WTC11 (cell line): ENCODE measurements at regions of chr20 and their contacts with region 1.

Region 1: DNA sequence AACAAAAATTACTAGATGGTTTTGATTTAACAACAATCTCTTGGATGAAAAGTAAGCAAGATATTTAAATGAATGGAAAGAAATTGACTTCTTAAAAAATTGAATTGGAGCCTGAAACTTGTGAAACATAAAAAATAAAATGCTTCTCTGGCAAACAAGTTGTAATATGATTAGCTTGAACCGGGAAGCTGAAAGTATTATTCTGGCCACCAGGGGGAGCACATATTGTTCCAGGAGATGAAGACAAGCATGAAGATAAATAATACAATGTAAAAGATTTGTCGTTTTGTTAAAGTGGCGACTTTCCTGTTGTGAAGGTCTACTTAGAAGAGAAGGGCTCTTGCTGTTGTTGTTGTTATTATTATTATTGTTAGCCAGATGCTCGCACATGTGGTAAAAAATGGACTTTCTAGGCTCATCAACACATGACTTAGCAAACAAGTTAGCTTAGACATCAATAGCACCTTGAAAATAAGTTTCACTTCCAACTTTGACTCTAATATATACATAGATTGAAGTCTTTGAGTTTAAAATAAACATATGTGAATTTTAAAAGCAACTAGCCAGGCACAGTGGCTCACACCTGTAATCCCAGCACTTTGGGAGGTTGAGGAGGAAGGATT is 14.2 kb downstream of the PAX1 start:
- DNase-seq: peak; percentile 74
- ATAC-seq: no peak
- H3K4me3 Mint-ChIP-seq: no peak overlapping the region
- H3K27ac Mint-ChIP-seq: no peak overlapping the region
- H3K4me1 Mint-ChIP-seq: peaks cover 26% of the 10 kb centered on the region
- H3K27me3 Mint-ChIP-seq: peaks cover 51% of the 10 kb centered on the region
- CTCF ChIP-seq: peak; percentile 69

Region 2: DNA sequence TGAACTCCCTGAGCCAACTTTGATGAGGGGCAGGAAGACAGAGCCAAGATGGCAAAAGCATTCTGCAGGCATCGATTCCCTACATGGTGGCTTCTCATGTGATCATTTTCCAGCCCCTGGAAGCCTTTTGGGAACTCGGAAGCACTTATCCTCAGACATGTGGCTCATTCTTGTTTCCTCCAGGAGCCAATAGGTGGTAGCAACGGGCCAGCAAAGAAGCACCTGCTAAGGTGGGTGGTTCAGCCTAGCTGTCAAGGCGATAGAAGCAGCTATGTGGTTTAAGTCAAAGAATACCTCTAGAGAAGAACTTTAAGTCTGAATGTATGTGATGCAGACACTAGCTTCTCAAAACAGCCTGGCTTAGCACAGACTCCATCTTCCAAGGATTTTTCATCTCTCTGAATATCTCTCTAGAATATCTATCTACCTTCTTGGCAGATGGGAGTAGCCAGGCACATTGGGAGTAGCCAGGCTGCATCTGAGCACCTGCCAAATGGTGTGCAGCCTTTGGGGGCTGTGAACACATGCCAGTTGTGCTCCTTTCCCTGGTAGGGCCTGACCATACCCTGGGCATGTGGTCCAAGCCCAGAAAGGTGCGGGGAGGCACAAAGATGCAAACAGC is 79.0 kb before region 1 on chr20:
- CTCF ChIA-PET with region 1: interaction called, 18 read pairs
- POLR2A ChIA-PET with region 1: no interaction called
- DNase-seq: peak; percentile 68
- ATAC-seq: peak; percentile 99
- H3K4me3 Mint-ChIP-seq: no peak overlapping the region
- H3K27ac Mint-ChIP-seq: no peak overlapping the region
- H3K4me1 Mint-ChIP-seq: no peaks in the 10 kb centered on the region
- H3K27me3 Mint-ChIP-seq: peaks cover 3% of the 10 kb centered on the region; the same call in 1 of the 2 replicates
- CTCF ChIP-seq: peak; percentile 30; the same call in 1 of the 2 replicates

Region 3: DNA sequence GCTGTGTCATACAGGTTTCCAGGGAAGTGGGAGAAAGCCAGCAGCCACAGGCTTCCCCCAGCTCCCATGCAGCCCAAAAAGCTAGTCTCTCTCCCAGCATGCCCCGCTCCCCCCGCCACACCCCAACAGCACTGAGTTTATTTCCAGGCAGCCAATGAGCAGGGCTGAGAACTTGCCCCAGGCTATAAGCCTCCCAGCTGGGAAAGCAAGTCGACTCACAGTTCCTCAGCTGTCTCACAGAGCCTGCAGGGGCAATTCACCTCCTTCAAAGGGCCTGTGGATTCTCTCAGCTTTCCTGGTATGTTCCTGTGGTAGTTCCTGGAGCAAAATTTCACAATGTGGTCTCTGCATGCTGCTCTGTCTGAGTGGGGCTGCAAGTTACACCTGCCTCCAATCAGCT is 20.0 kb after region 1 on chr20:
- CTCF ChIA-PET with region 1: interaction called, 16 read pairs
- POLR2A ChIA-PET with region 1: no interaction called
- DNase-seq: no peak
- ATAC-seq: peak; percentile 41
- H3K4me3 Mint-ChIP-seq: no peak overlapping the region
- H3K27ac Mint-ChIP-seq: no peak overlapping the region
- H3K4me1 Mint-ChIP-seq: no peaks in the 10 kb centered on the region
- H3K27me3 Mint-ChIP-seq: peaks cover 5% of the 10 kb centered on the region
- CTCF ChIP-seq: no peak

Region 4: DNA sequence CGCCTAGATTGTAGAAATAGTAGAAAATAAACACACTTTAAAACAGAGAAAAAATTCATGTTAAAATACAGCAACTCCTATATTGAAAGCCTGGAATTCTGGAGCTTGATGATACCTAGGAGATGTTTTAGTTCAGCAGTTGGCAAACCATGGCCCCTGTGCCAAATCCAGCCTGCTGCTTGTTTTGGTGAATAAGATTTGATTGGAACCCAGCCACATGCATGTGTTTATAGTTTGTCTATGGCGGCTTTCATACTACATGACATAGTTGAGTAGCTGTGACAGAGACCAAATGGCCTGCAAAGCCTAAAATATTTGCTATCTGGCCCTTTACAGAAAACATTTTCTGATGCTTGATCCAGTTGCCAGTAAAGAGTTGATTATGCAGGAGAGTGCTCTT is 42.9 kb after region 1 on chr20:
- CTCF ChIA-PET with region 1: interaction called, 58 read pairs
- POLR2A ChIA-PET with region 1: no interaction called
- DNase-seq: no peak
- ATAC-seq: no peak
- H3K4me3 Mint-ChIP-seq: no peak overlapping the region
- H3K27ac Mint-ChIP-seq: no peak overlapping the region
- H3K4me1 Mint-ChIP-seq: no peaks in the 10 kb centered on the region
- H3K27me3 Mint-ChIP-seq: peaks cover 15% of the 10 kb centered on the region
- CTCF ChIP-seq: no peak

Region 5: DNA sequence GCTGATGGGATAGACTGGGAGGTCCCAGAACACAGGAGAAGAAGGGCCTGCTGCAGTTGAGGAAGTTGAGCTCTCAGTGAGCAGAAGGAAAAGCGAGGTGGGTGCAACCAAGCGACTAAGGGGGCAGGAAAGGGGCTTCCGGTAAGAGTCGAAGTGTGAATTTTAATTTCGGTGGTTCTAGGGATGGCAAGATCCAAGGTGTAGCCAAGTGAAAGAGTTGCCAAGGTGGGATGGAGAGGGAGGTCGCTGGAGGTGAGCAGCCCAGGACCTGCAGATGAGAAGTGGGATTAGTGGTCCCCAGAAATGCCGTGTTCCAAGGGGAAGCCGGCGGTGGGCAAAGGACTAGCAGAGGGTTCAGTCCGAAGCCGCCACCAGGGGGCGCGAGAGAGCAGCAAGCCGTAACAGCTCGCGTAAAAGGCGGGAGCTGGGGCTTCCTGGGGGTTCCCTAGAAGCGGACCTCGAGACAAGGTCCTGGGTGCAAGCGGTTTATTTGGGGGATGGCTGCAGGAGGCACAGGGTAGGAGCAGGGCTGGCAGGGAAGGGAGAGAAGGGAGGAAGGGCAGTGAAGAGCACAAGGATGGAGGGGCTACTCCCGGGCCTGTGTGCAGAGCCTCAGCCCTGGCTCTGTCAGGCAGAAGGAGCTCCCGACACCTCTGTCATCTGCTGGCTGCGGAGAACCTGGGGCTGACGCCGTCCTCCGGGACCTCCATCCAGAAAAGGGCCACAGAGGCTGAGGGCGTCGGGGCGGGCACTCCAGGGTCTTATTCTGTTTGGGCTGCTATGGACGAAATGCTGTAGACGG is 89.4 kb after region 1 on chr20:
- CTCF ChIA-PET with region 1: interaction called, 13 read pairs
- POLR2A ChIA-PET with region 1: no interaction called
- DNase-seq: peak; percentile 89
- ATAC-seq: peak; percentile 90
- H3K4me3 Mint-ChIP-seq: no peak overlapping the region
- H3K27ac Mint-ChIP-seq: no peak overlapping the region
- H3K4me1 Mint-ChIP-seq: peaks cover 2% of the 10 kb centered on the region; the same call in 1 of the 2 replicates
- H3K27me3 Mint-ChIP-seq: peaks cover 19% of the 10 kb centered on the region
- CTCF ChIP-seq: peak; percentile 99

Region 6: GRCh38 chr20:22020201-22020600 is 300.5 kb after region 1 on chr20:
- CTCF ChIA-PET with region 1: no interaction called
- POLR2A ChIA-PET with region 1: no interaction called
- DNase-seq: no peak
- ATAC-seq: no peak
- H3K4me3 Mint-ChIP-seq: no peak overlapping the region
- H3K27ac Mint-ChIP-seq: no peak overlapping the region
- H3K4me1 Mint-ChIP-seq: no peaks in the 10 kb centered on the region
- H3K27me3 Mint-ChIP-seq: no peaks in the 10 kb centered on the region
- CTCF ChIP-seq: no peak